ENCODE measurements at regions of chr10 and their contacts with region 1.

Region 1: DNA sequence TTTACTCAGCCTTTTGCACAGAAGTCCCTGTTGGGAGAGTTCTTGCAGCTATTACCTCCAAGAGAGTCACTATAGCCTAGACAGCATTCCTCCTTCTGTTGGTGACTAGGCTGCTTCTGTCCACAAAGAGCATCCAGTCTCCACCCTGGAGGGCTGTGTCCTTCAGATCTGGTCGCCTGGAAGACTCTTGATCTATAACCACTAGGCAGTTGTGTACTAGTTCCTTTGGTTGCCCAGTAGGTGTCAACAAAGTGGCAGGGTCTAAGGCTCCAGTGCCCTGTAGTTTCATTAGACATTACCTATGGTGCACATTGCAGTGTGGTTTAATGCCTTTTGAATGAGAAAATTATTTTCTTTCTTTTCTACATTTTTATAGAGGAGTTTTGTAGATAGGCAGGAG is 11.3 kb upstream of the AKR1C2 start:
- DNase-seq: no peak
- ATAC-seq: peak; percentile 34 to 41
- H3K4me3 ChIP-seq: no peak overlapping the region
- H3K27ac ChIP-seq: no peak overlapping the region
- H3K4me1 ChIP-seq: peaks cover 23 to 42% of the 10 kb centered on the region in 2 donors
- H3K27me3 ChIP-seq: no peaks in the 10 kb centered on the region
- CTCF ChIP-seq: peak in 2 of 5 experiments; percentile 14 to 23
- POLR2A ChIP-seq: no peak

Region 2: DNA sequence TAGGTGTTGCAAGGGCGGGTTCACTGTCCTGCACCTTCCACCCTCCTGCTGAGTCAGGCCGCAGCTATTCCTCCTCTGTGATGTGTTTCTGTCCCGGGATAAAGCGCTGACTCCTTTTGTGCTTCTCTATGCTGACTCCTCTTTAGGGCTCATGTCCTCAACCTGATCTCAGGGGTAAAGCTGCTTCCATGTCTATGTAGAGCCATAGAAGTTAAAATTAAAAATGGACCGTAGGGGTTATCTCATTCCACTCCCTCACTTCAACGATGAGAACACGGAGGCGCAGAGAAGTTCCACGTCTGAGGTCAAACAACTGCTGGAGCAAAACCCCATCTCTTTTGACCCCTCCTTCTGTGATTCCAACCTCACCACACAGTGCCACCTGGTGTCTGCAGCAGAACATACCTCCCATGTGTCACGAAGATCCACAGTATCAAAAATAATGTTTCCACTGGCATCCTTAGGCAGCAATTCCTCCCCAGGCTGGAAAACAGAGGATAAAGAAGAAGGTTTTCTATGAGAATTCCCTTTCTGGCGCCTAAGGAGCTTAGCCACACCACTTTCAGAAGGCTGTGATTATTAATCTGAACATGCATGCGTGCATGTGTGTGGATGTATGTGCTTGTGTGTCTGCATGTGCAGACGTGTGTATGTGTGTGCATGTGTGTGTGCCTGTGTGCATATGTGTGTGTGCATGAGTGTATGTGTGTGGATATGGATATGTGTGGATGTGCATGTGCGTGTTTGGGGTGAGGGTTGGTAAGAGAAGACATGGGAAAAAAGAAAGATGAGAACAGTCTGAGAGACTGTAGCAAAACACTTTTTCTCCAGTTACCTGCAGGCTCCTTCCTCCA is 268.6 kb after region 1 on chr10:
- in situ Hi-C with region 1: loop called in 1 of 4 experiments (anchors 25 kb)
- intact Hi-C with region 1: no loop called
- DNase-seq: peak; percentile 19 to 49
- ATAC-seq: peak; percentile 78 to 87
- H3K4me3 ChIP-seq: no peak overlapping the region
- H3K27ac ChIP-seq: no peak overlapping the region
- H3K4me1 ChIP-seq: no peaks in the 10 kb centered on the region
- H3K27me3 ChIP-seq: no peaks in the 10 kb centered on the region
- CTCF ChIP-seq: peak; percentile 40 to 62 (median 57)
- POLR2A ChIP-seq: no peak

Region 3: DNA sequence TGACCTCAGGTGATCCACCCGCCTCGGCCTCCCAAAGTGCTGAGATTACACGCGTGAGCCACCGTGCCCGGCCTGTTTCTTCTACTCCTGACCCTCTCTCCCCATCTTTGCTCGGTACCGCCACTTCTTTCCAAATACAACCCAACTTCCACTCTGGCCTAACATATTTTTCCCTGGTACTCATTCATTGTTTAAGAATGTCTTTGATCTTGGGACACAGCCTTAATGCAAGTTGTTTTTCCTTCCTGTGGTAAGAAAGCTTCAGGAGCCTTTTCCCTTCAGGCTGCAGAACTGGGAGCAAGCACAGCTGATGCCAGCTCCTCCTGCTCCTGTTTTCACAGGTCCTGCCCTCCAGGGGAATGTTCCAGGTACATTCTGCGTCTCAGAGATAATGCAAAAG is 523.5 kb after region 1 on chr10:
- in situ Hi-C with region 1: no loop called
- intact Hi-C with region 1: no loop called
- DNase-seq: no peak
- ATAC-seq: no peak
- H3K4me3 ChIP-seq: no peak overlapping the region
- H3K27ac ChIP-seq: no peak overlapping the region
- H3K4me1 ChIP-seq: no peaks in the 10 kb centered on the region
- H3K27me3 ChIP-seq: no peaks in the 10 kb centered on the region
- CTCF ChIP-seq: no peak
- POLR2A ChIP-seq: no peak